ENCODE measurements at regions of chr9 and their contacts with region 1.

Region 1: DNA sequence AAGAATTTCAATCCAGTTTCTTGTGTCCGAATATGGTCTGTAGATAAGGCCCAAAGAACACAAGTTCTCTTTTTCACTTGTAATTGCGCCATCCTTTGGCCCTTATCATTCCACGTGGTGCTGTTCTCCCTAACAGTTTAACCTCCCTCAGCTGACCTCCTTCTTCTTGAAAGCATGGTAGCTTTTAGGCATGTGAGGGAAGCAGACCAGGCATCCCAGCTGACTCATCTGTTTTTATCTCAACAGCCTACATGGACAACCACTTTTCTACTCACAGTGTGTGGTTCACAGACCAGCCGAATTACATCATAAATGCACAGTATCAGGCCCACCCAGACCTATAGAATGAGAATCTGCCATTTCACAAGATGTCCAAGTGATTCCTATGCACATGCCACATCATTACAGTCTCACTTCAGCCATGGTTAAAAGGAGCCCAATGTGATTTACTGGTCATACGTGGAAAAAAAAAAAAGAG is 26.9 kb upstream of the PLIN2 start:
- DNase-seq: peak; percentile 18
- H3K4me3 Mint-ChIP-seq: no peak overlapping the region
- H3K27ac Mint-ChIP-seq: no peak overlapping the region
- H3K4me1 Mint-ChIP-seq: peaks cover 36% of the 10 kb centered on the region
- H3K27me3 Mint-ChIP-seq: no peaks in the 10 kb centered on the region

Region 2: GRCh38 chr9:19127881-19128500 is 26.2 kb before region 1 on chr9:
- CTCF ChIA-PET with region 1: interaction called, 12 read pairs
- POLR2A ChIA-PET with region 1: interaction called, 15 read pairs
- intact Hi-C with region 1: loop called (anchors 1 kb)
- DNase-seq: peak; percentile 48
- H3K4me3 Mint-ChIP-seq: peak overlapping the region; percentile 93
- H3K27ac Mint-ChIP-seq: peak overlapping the region; percentile 97
- H3K4me1 Mint-ChIP-seq: peaks cover 56% of the 10 kb centered on the region
- H3K27me3 Mint-ChIP-seq: no peaks in the 10 kb centered on the region

Region 3: DNA sequence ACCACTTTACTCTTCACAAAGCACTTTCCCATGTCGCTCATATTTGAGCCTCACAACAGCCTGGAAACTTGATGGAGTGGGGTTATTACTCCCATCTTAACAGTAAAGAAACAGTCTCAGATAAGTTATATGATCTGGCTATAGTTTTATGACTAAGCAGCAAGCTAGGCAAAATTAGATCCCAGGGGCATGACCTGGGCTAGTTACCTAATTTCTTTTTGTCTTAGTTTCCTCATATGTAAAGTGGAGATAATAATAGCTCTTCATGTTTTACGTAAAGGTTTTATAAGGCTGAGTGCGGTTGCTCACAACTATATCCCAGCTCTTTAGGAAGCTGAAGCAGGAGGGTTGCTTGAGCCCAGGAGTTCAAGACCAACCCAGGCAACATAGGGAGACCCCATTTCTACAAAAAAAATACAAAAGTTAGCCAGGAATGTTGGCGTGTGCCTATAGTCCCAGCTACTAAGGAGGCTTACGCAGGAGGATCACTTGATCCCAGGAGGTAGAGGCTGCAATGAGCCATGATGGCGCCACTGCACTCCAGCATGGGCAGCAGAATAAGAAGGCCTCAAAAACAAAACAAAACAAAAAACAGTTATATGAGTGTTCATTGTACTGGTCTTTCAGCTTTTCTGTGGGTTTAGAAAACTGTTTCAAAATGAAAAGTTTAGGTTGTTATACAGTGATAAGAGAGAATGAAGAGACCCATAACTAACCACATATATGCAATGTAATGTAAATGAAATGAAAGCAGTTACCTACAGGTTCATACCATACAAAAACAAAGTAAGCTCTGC is 20.4 kb before region 1 on chr9:
- CTCF ChIA-PET with region 1: interaction called, 12 read pairs
- POLR2A ChIA-PET with region 1: interaction called, 15 read pairs
- intact Hi-C with region 1: loop called (anchors 1 kb)
- DNase-seq: peak; percentile 38
- H3K4me3 Mint-ChIP-seq: no peak overlapping the region
- H3K27ac Mint-ChIP-seq: peak overlapping the region; percentile 54
- H3K4me1 Mint-ChIP-seq: peaks cover 28% of the 10 kb centered on the region
- H3K27me3 Mint-ChIP-seq: no peaks in the 10 kb centered on the region

Measured in activated CD4-positive, alpha-beta memory T cell treated with anti-CD3 and anti-CD28 coated beads for 36 hours (primary cell).